ENCODE measurements at regions of chr11 and their contacts with region 1.

Region 1: GRCh38 chr11:44804449-44805437 is 78.0 kb downstream of the TSPAN18 start:
- DNase-seq: no peak
- H3K4me3 ChIP-seq: no peak overlapping the region
- CTCF ChIP-seq: no peak

Region 2: GRCh38 chr11:44456544-44457300 is 348.0 kb before region 1 on chr11:
- CTCF ChIA-PET with region 1: no interaction called
- POLR2A ChIA-PET with region 1: no interaction called
- DNase-seq: no peak
- H3K4me3 ChIP-seq: no peak overlapping the region
- CTCF ChIP-seq: peak; percentile 45

Region 3: DNA sequence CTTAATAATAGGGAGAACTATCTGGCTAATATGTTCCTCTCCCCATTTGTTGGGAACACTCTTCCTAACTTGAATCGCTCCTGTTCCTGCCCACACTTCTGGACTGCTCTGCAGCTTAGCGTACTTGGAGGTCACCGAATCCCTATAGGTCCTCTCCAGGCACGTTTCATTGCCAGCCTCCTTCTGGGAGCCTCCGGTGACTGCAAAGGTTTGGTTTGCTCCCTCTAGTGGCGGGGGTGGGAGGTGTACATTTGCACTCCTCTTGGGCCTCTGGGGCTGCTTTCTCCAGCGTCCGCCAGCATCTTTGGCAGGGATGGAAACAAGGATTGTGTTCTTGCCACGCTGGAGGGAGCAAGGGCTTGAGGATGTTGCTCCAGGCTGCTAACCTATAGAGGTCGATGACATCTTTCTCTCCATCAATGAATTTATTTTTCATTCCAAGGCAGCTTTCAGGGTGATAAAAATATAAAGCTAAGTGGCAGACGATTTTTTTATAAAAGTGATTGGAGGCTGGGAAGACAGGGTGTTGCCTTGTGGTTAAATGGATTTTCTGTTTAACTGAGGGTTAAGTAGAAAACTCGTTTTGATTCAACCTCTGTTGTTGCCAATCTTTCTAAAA is 29.3 kb before region 1 on chr11:
- CTCF ChIA-PET with region 1: interaction called, 18 read pairs
- POLR2A ChIA-PET with region 1: no interaction called
- DNase-seq: no peak
- H3K4me3 ChIP-seq: no peak overlapping the region
- CTCF ChIP-seq: peak; percentile 64

Measured in AG04449 (cell line).